ENCODE measurements at regions of chr3 and their contacts with region 1.

Region 1: GRCh38 chr3:188126276-188126675 is 27.7 kb upstream of the LPP start:
- DNase-seq: no peak
- H3K4me3 ChIP-seq: peak overlapping the region in 1 of 2 donors; percentile 14
- H3K27ac ChIP-seq: peak overlapping the region; percentile 58 to 68
- H3K4me1 ChIP-seq: peaks cover 0 to 9% of the 10 kb centered on the region in 2 donors
- H3K27me3 ChIP-seq: no peaks in the 10 kb centered on the region
- CTCF ChIP-seq: no peak

Region 2: GRCh38 chr3:188071636-188072035 is 54.6 kb before region 1 on chr3:
- intact Hi-C with region 1: loop called (anchors 5 kb)
- DNase-seq: no peak
- H3K4me3 ChIP-seq: no peak overlapping the region
- H3K27ac ChIP-seq: no peak overlapping the region
- H3K4me1 ChIP-seq: no peaks in the 10 kb centered on the region
- H3K27me3 ChIP-seq: no peaks in the 10 kb centered on the region
- CTCF ChIP-seq: no peak